HCT116 (cell line): ENCODE measurements at regions of chr5 and their contacts with region 1.

Region 1: GRCh38 chr5:76601470-76601869 is 21.7 kb downstream of the F2RL2 start:
- DNase-seq: peak; percentile 48
- ATAC-seq: peak; percentile 84
- H3K4me3 ChIP-seq: no peak overlapping the region
- H3K27ac ChIP-seq: no peak overlapping the region
- H3K4me1 ChIP-seq: peaks cover 4% of the 10 kb centered on the region in 2 experiments; a peak in 3 of 4 replicates
- H3K27me3 ChIP-seq: no peaks in the 10 kb centered on the region
- CTCF ChIP-seq: peak; percentile 64 to 84 (median 82)
- POLR2A ChIP-seq: no peak
- RAD21 ChIP-seq: peak; percentile 91

Region 2: DNA sequence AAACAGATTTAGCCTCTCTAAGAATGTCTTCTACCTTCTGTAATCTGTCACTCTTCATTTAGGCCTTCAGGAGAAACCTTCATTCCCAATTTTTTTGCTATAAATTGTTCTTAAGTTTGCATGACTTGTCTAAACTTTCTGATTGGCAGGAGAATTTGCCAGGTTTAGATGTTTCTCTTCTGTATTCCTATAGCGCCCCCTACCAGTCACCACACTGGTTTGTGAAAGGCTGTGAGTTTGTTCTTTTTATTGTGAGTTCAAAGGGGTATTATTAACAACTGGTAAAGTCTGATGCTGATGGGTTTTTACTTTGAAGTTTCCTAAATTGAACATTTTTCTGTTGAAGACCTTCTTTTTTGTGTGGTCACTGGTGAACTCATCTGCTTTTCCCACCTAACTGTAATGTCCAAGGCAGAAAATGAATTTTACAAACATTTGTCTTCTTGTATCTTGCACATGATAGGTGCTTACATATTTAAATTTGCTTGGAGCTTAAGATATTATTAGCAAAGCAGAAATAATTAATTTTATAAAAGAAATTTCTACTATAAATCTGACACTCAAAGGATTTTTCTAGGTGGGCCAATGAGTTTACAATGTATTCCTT is 40.1 kb after region 1 on chr5:
- CTCF ChIA-PET with region 1: interaction called, 5 read pairs
- POLR2A ChIA-PET with region 1: no interaction called
- RAD21 ChIA-PET with region 1: no interaction called
- intact Hi-C with region 1: loop called (anchors 1 kb)
- DNase-seq: peak; percentile 71
- ATAC-seq: peak; percentile 74
- H3K4me3 ChIP-seq: no peak overlapping the region
- H3K27ac ChIP-seq: no peak overlapping the region
- H3K4me1 ChIP-seq: no peaks in the 10 kb centered on the region
- H3K27me3 ChIP-seq: no peaks in the 10 kb centered on the region
- CTCF ChIP-seq: peak; percentile 82 to 96 (median 83)
- POLR2A ChIP-seq: no peak
- RAD21 ChIP-seq: peak; percentile 81

Region 3: GRCh38 chr5:76838481-76839261 is 237.2 kb after region 1 on chr5:
- CTCF ChIA-PET with region 1: no interaction called
- POLR2A ChIA-PET with region 1: no interaction called
- RAD21 ChIA-PET with region 1: no interaction called
- intact Hi-C with region 1: loop called (anchors 5 kb)
- DNase-seq: peak; percentile 92
- ATAC-seq: peak; percentile 79
- H3K4me3 ChIP-seq: peak overlapping the region; percentile 3 to 30; a peak in 2 of 4 replicates
- H3K27ac ChIP-seq: peak overlapping the region; percentile 96
- H3K4me1 ChIP-seq: peaks cover 68 to 82% of the 10 kb centered on the region in 2 experiments
- H3K27me3 ChIP-seq: no peaks in the 10 kb centered on the region
- CTCF ChIP-seq: no peak
- POLR2A ChIP-seq: no peak
- RAD21 ChIP-seq: peak; percentile 15

Region 4: GRCh38 chr5:76867827-76868693 is 266.6 kb after region 1 on chr5:
- CTCF ChIA-PET with region 1: interaction called, 4 read pairs
- POLR2A ChIA-PET with region 1: no interaction called
- RAD21 ChIA-PET with region 1: no interaction called
- intact Hi-C with region 1: loop called (anchors 5 kb)
- DNase-seq: peak; percentile 63
- ATAC-seq: peak; percentile 89
- H3K4me3 ChIP-seq: no peak overlapping the region
- H3K27ac ChIP-seq: no peak overlapping the region
- H3K4me1 ChIP-seq: peaks cover 0 to 11% of the 10 kb centered on the region in 2 experiments; a peak in 3 of 4 replicates
- H3K27me3 ChIP-seq: no peaks in the 10 kb centered on the region
- CTCF ChIP-seq: peak; percentile 78 to 88 (median 82)
- POLR2A ChIP-seq: no peak
- RAD21 ChIP-seq: peak; percentile 89

Region 5: GRCh38 chr5:77015938-77016569 is 414.6 kb after region 1 on chr5:
- CTCF ChIA-PET with region 1: interaction called, 6 read pairs
- POLR2A ChIA-PET with region 1: no interaction called
- RAD21 ChIA-PET with region 1: interaction called in 1 of 2 experiments, 3 read pairs
- intact Hi-C with region 1: loop called (anchors 1 kb)
- DNase-seq: peak; percentile 57
- ATAC-seq: peak; percentile 81
- H3K4me3 ChIP-seq: no peak overlapping the region
- H3K27ac ChIP-seq: no peak overlapping the region
- H3K4me1 ChIP-seq: peaks cover 0 to 5% of the 10 kb centered on the region in 2 experiments; a peak in 1 of 4 replicates
- H3K27me3 ChIP-seq: no peaks in the 10 kb centered on the region
- CTCF ChIP-seq: peak; percentile 26 to 77 (median 59); a peak in 5 of 6 replicates
- POLR2A ChIP-seq: no peak
- RAD21 ChIP-seq: peak; percentile 81